ENCODE measurements at regions of chr3 and their contacts with region 1.

Region 1: GRCh38 chr3:125585595-125586223 is 9.6 kb downstream of the OSBPL11 start:
- H3K4me3 Mint-ChIP-seq: no peak overlapping the region
- H3K27ac Mint-ChIP-seq: no peak overlapping the region
- H3K4me1 Mint-ChIP-seq: peaks cover 40% of the 10 kb centered on the region
- H3K27me3 Mint-ChIP-seq: no peaks in the 10 kb centered on the region

Region 2: DNA sequence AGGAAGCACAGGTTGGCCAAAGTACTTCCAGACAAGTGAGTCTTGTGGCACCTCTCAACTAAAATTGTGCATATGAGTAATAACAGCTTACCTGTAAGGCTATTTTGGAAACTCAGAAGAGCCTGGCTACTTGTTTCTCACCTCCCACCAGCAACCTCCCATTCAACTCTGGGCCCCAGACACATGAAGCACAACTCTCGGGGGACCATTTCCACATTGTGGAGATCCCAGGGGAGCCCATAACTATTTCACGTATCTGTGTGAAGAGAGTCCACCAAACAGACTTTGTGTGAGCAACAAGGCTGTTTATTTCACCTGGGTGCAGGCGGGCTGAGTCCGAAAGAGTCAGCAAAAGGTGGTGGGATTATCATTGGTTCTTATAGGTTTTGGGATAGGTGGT is 60.6 kb before region 1 on chr3:
- intact Hi-C with region 1: loop called (anchors 10 kb)
- H3K4me3 Mint-ChIP-seq: no peak overlapping the region
- H3K27ac Mint-ChIP-seq: no peak overlapping the region
- H3K4me1 Mint-ChIP-seq: peaks cover 4% of the 10 kb centered on the region
- H3K27me3 Mint-ChIP-seq: no peaks in the 10 kb centered on the region

Region 3: DNA sequence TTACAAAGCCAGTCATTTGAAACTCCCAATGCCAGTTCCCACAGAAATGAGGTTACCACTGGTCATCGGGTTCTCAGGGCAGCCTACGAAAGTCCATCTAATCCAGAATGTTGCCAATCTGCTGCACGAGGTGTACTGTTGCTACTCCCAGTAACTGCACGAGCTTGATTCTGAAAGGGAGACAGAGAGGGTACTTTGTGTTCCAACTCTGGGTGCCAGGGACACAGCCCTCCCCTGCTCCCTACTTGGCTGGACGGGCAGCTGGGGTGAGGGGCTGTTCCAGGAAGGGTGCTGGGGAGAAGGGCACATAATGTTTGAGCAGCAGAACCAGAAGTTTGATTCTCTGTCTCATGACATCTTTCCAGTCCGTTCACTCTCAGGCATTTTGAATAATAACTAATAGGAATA is 36.7 kb after region 1 on chr3:
- intact Hi-C with region 1: no loop called
- H3K4me3 Mint-ChIP-seq: no peak overlapping the region
- H3K27ac Mint-ChIP-seq: no peak overlapping the region
- H3K4me1 Mint-ChIP-seq: peaks cover 8% of the 10 kb centered on the region
- H3K27me3 Mint-ChIP-seq: peaks cover 12% of the 10 kb centered on the region

Measured in dendritic cell treated with granulocyte-macrophage colony-stimulating factor and Interleukin-4, amounts not matched to agents 40 ng/mL and 50 ng/mL, for 4 days (primary cell).